ENCODE measurements at regions of chr12 and their contacts with region 1.

Region 1: DNA sequence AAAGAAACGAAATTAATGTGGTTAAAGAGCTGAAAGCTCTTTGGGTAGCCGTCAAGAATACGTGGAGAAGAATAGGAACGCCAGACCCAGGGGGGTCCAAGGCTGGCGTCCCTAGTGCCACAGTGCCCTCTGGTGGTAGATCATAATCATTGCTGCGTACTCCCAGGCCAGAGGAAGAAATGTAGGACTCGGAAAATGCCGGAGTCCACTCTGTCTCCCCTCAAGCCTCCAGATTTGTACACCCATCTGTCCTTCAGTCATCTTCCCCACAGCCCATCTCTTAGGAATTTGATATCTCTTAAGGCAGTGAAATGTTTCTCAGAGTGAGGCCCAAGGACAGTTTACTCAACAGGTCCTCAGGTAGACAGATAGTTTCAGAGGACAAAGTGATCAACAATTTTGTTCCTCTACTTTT is 25.4 kb upstream of the PLEKHG6 start:
- DNase-seq: peak; percentile 66 to 76 (median 68)
- H3K4me3 ChIP-seq: no peak overlapping the region
- H3K27ac ChIP-seq: no peak overlapping the region
- H3K4me1 ChIP-seq: peaks cover 0 to 10% (median 0%) of the 10 kb centered on the region in 4 experiments
- H3K27me3 ChIP-seq: no peaks in the 10 kb centered on the region

Region 2: GRCh38 chr12:6056406-6057240 is 228.4 kb before region 1 on chr12:
- CTCF ChIA-PET with region 1: interaction called, 100 read pairs
- POLR2A ChIA-PET with region 1: no interaction called
- DNase-seq: peak; percentile 73 to 81 (median 79)
- H3K4me3 ChIP-seq: peak overlapping the region in 4 of 7 experiments; percentile 0 to 68 (median 36)
- H3K27ac ChIP-seq: no peak overlapping the region
- H3K4me1 ChIP-seq: peaks cover 0 to 21% (median 9%) of the 10 kb centered on the region in 4 experiments
- H3K27me3 ChIP-seq: no peaks in the 10 kb centered on the region

Region 3: GRCh38 chr12:6295094-6295811 is 10.2 kb after region 1 on chr12:
- CTCF ChIA-PET with region 1: interaction called, 20 read pairs
- POLR2A ChIA-PET with region 1: no interaction called
- DNase-seq: peak; percentile 92 to 94 (median 93)
- H3K4me3 ChIP-seq: peak overlapping the region in 2 of 7 experiments; percentile 1 to 33
- H3K27ac ChIP-seq: peak overlapping the region; percentile 89 to 93
- H3K4me1 ChIP-seq: peaks cover 0 to 31% (median 15%) of the 10 kb centered on the region in 4 experiments
- H3K27me3 ChIP-seq: no peaks in the 10 kb centered on the region

Measured in common myeloid progenitor, CD34-positive (primary cell).